ENCODE measurements at regions of chr6 and their contacts with region 1.

Region 1: DNA sequence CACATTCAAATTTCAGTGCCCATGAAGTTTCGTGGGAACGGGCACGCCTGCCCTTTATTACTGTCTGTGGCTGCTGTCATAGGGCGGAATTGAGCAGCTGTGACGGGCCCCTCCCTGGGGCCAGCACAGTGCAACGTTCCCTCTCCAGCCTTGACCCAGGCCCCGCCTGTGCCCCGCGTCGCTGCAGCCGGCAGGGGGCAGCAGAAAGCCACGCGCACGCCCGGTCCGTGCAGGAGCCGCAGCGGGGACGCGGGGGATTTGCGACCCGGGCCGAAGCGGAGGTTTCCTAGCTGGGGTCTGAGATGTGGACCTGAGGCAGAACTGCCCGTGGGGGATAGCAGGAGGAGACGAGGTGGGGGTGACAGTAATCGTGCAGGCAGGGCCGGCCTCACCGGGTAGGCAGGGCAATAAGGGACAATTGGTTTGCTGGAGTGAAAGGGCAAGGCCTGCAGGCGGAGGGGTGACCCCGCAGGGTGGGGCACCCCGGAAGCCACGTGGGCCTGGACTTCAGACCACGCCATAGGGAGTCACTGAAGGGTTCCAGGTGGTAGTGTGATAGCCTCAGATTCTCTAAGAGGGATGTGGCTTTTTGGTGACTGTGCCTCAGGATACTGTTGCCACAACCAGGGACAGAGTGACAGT is 54.4 kb downstream of the SYTL3 start:
- DNase-seq: peak; percentile 64
- H3K4me3 ChIP-seq: peak overlapping the region; percentile 35 to 54 (median 47)
- H3K27ac ChIP-seq: no peak overlapping the region
- H3K4me1 ChIP-seq: peaks cover 32% of the 10 kb centered on the region
- H3K27me3 ChIP-seq: no peaks in the 10 kb centered on the region
- CTCF ChIP-seq: peak; percentile 80 to 99

Region 2: DNA sequence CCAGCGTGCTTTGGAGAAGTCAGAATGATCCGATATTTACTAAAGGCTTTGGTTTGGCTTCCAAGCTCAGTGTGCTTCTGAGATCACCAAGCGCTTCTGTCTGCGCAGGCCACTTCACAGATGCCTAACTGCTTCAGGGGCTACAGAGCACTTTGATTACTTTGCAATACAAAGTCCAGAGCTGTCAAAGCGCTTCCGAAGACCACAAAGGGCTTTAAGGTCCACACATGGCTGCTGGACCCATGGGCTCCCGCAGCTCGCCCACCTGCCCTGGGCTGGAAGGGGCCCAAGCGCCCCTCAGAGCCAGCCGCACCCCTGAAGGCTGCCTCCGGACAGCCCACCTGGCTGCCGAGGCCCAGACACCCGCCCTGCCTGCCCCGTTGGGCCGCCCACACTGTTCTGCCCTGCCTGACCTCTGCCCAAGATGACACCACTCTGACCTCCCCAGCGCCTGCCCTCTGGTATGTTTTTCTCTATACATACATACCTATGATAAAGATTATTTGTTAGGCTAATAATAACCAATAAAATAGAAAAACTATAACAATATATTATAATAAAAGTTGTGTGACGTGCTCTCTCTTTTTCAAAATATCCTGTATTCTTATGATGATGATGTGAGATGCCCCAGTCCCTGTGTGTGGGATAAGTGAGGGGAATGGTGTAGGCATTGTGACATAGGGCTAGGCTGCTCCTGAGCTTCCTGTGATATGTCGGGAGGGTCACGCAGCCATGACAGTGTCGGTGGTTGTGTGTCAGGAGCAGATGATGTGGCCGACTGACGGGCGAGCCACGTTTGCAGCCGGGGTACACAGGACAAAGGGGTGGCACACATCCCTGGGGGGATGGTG is 82.4 kb before region 1 on chr6:
- CTCF ChIA-PET with region 1: no interaction called
- dilution Hi-C with region 1: no loop called
- in situ Hi-C with region 1: no loop called
- intact Hi-C with region 1: no loop called
- DNase-seq: no peak
- H3K4me3 ChIP-seq: no peak overlapping the region
- H3K27ac ChIP-seq: no peak overlapping the region
- H3K4me1 ChIP-seq: no peaks in the 10 kb centered on the region
- H3K27me3 ChIP-seq: no peaks in the 10 kb centered on the region
- CTCF ChIP-seq: no peak

Region 3: GRCh38 chr6:158718461-158719046 is 14.3 kb after region 1 on chr6:
- CTCF ChIA-PET with region 1: interaction called, 5 read pairs
- dilution Hi-C with region 1: no loop called
- in situ Hi-C with region 1: no loop called
- intact Hi-C with region 1: loop called (anchors 1 kb)
- DNase-seq: no peak
- H3K4me3 ChIP-seq: no peak overlapping the region
- H3K27ac ChIP-seq: no peak overlapping the region
- H3K4me1 ChIP-seq: peaks cover 15% of the 10 kb centered on the region
- H3K27me3 ChIP-seq: no peaks in the 10 kb centered on the region
- CTCF ChIP-seq: peak; percentile 34 to 55

Region 4: GRCh38 chr6:158762787-158763433 is 58.6 kb after region 1 on chr6:
- CTCF ChIA-PET with region 1: no interaction called
- dilution Hi-C with region 1: loop called (anchors 5 kb)
- in situ Hi-C with region 1: no loop called
- intact Hi-C with region 1: no loop called
- DNase-seq: peak; percentile 33
- H3K4me3 ChIP-seq: no peak overlapping the region
- H3K27ac ChIP-seq: no peak overlapping the region
- H3K4me1 ChIP-seq: peaks cover 7% of the 10 kb centered on the region
- H3K27me3 ChIP-seq: no peaks in the 10 kb centered on the region
- CTCF ChIP-seq: no peak

Region 5: GRCh38 chr6:158793432-158793831 is 89.1 kb after region 1 on chr6:
- CTCF ChIA-PET with region 1: no interaction called
- dilution Hi-C with region 1: no loop called
- in situ Hi-C with region 1: no loop called
- intact Hi-C with region 1: loop called (anchors 1 kb)
- DNase-seq: no peak
- H3K4me3 ChIP-seq: no peak overlapping the region
- H3K27ac ChIP-seq: no peak overlapping the region
- H3K4me1 ChIP-seq: peaks cover 19% of the 10 kb centered on the region
- H3K27me3 ChIP-seq: no peaks in the 10 kb centered on the region
- CTCF ChIP-seq: peak; percentile 51 to 61

Region 6: DNA sequence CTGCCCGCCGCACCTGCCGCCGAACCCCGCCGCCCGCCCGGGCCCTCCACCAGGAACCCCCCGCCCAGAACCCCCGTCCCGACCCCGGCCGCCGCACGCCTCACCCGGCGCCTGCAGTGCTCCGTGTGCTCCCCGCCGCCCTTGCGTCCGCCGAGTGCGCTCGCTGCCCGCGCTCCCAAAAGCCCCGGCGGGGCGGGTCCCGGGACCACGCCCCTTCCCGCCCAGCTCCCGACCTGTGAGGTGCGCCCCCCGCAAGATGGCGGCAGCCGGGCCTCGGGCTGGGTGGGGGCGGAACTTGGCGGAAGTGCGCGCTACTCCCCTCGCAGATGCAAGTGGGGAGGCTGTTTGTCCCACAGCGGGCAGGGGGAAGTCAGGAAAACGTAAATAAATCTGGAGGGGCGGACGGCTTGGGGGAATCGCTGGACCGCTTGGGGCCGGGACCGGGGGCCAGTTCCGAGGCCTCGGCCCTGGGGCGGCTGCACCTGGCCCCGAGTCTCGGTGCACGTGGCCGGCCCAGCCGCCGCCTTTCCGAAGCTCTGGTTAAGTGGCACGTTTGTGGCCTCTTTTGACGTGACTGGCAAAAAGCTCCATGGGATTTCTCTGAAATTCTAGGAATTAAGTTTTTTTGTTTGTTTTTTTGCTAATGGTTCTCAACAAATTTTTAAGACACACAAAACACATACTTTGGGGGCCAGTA is 115.1 kb after region 1 on chr6 and contains the start of gene EZR:
- CTCF ChIA-PET with region 1: no interaction called
- dilution Hi-C with region 1: no loop called
- in situ Hi-C with region 1: no loop called
- intact Hi-C with region 1: loop called (anchors 1 kb)
- DNase-seq: peak; percentile 76
- H3K4me3 ChIP-seq: peak within 1 kb of the TSS; percentile 80 to 87 (median 80)
- H3K27ac ChIP-seq: peak within 1 kb of the TSS; percentile 96
- H3K4me1 ChIP-seq: peaks cover 21% of the 10 kb centered on the region
- H3K27me3 ChIP-seq: no peaks in the 10 kb centered on the region
- CTCF ChIP-seq: no peak
- total RNA-seq, gene EZR: 164 to 240 TPM

Region 7: DNA sequence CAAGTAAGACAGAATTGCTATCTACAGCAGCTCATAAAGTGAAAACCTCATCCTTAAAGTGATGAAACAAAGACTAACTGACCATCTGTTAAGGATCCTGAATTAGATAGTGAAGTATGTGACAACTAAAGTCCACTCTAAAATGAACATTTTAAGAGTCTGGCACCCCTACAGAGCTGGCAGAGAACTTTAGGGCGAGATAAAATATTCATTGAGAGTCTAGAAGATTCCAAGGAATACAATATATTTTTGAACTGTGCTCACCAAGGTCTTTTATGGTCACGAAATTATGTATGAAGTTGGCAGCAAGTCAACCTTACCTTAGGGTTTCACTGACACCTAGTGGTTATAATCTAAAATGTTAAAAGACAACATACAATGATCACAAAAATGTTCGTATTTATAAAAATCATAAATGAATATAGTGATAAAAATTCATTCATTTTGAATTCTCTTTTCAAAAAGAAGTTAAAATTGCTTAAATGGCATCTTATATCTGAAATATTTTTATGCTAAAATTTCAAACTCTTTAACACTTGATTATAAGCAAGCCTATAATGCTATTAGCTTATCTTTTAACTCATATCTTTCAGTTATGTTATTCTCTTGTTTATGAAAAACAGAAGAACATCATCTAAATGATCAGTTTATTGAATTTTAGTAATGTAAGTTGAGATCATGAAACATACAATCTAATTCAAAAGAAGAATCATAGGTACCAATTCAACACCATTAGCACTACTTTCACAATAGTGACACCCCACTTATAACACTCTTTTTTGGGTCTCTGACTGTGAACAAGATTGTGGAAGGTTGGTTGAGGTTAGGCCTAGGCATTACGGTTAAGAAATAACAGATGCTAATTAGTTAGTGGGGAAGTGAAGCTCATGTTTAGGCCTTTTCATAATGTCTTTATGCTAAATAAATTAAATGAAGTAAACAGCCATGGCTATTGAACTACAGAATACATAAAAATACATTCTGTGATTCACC is 268.2 kb after region 1 on chr6:
- CTCF ChIA-PET with region 1: no interaction called
- dilution Hi-C with region 1: loop called (anchors 5 kb)
- in situ Hi-C with region 1: loop called in 1 of 2 experiments (anchors 5 kb)
- intact Hi-C with region 1: loop called (anchors 1 kb)
- DNase-seq: peak; percentile 50
- H3K4me3 ChIP-seq: no peak overlapping the region
- H3K27ac ChIP-seq: peak overlapping the region; percentile 49
- H3K4me1 ChIP-seq: no peaks in the 10 kb centered on the region
- H3K27me3 ChIP-seq: no peaks in the 10 kb centered on the region
- CTCF ChIP-seq: peak; percentile 39 to 43

Region 8: GRCh38 chr6:159042003-159042825 is 337.9 kb after region 1 on chr6:
- CTCF ChIA-PET with region 1: no interaction called
- dilution Hi-C with region 1: no loop called
- in situ Hi-C with region 1: no loop called
- intact Hi-C with region 1: loop called (anchors 1 kb)
- DNase-seq: peak; percentile 84
- H3K4me3 ChIP-seq: no peak overlapping the region
- H3K27ac ChIP-seq: peak overlapping the region; percentile 74
- H3K4me1 ChIP-seq: peaks cover 27% of the 10 kb centered on the region
- H3K27me3 ChIP-seq: no peaks in the 10 kb centered on the region
- CTCF ChIP-seq: peak; percentile 94 to 99